Gastrocnemius medialis (tissue), 4 donors: ENCODE measurements at regions of chr18 and their contacts with region 1.

Region 1: DNA sequence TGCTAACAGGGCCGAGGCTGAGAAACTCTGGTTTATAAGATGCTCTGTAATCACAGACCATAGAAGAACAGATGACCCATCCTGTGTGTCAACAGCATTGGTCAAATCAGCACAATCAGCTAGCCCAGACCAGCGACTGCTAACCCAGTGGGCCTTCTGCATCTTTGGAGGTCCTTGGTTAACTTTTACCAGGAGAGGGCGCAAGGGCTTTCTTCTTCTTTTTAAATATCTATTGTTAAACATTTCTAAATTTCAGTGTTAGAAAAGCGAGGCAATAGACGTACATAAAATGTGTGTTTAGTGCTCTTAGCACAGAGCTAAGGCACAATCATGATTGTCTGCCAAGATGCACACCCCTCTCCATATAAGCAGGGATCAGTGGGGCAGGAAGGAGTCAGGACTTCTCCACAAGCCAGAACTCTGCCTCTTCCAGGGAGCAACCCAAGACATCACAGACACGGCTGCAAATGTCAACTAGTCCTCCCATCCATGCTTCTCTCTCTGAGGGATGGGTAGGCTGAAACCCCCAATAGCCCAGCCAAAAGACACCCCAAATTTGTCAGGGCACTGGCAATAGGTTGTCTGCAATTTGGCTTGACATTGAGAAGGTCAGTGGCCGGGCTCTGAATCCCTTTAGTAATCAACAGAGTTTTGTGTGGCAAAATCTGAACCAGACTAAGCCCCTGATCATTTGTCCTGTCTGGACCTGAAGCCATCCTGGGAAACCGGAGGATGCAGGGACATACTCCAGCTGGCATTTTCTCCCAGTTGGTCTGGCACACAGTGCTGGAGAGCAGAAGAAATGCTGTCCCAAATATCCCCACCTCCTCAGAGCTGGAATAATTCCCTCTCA is 188.2 kb downstream of the BCL2 start:
- DNase-seq: peak; percentile 27 to 33
- ATAC-seq: peak; percentile 50 to 59
- H3K4me3 ChIP-seq: no peak overlapping the region
- H3K27ac ChIP-seq: peak overlapping the region; percentile 24 to 55 (median 48)
- H3K4me1 ChIP-seq: peaks cover 18 to 23% of the 10 kb centered on the region in 2 donors
- H3K27me3 ChIP-seq: no peaks in the 10 kb centered on the region
- CTCF ChIP-seq: peak; percentile 48 to 69 (median 63)
- POLR2A ChIP-seq: no peak

Region 2: GRCh38 chr18:63155169-63155852 is 24.0 kb after region 1 on chr18:
- in situ Hi-C with region 1: no loop called
- intact Hi-C with region 1: loop called (anchors 2 kb)
- DNase-seq: peak; percentile 58 to 77
- ATAC-seq: peak; percentile 71 to 92
- H3K4me3 ChIP-seq: peak overlapping the region; percentile 15 to 42 (median 31)
- H3K27ac ChIP-seq: peak overlapping the region in 3 of 4 donors; percentile 60 to 82 (median 63)
- H3K4me1 ChIP-seq: peaks cover 27 to 34% of the 10 kb centered on the region in 2 donors
- H3K27me3 ChIP-seq: no peaks in the 10 kb centered on the region
- CTCF ChIP-seq: peak; percentile 76 to 85 (median 80)
- POLR2A ChIP-seq: no peak

Region 3: GRCh38 chr18:63262369-63263335 is 131.3 kb after region 1 on chr18:
- in situ Hi-C with region 1: no loop called
- intact Hi-C with region 1: loop called (anchors 2 kb)
- DNase-seq: peak; percentile 56 to 72
- ATAC-seq: peak; percentile 67 to 80
- H3K4me3 ChIP-seq: peak overlapping the region in 3 of 4 donors; percentile 10 to 31 (median 16)
- H3K27ac ChIP-seq: peak overlapping the region; percentile 69 to 84 (median 82)
- H3K4me1 ChIP-seq: peaks cover 54 to 61% of the 10 kb centered on the region in 2 donors
- H3K27me3 ChIP-seq: no peaks in the 10 kb centered on the region
- CTCF ChIP-seq: peak in 3 of 5 experiments; percentile 7 to 26 (median 14)
- POLR2A ChIP-seq: peak in 1 of 2 donors; percentile 24

Region 4: DNA sequence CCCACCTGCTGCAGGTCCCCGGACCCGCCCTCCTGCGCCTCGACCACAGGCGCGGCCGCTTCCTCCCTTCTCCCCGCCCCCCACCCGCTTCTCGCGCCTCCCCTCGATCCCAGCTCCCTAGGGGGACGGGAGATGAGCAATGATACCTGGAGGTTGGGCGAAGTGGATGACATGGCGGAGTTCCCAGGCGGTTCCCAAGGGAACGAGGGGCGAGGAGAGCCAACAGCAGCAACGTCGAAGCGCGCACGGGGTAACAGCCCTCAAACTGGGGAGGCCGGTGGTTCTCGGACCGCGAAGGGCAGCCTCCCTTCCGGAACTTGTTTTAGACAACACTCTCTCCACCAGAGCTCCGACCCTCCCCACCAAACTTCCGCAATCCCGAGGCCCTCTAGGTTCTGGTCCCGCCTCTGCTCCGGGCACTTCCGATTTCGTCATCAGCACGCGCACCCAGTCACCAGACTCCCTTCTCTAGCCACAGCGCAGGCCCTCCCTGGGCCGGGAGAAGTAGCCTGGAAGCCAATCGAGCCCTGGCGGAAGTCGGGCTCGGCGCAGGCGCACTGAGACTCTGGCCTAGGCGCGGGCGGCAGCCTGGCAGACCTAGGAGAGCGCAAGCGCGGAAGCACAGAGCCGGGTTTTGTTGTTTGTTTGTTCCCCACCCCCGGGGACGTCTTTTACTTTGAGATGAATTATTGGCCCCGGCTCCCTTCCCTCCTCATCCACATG is 290.9 kb after region 1 on chr18 and contains the start of gene VPS4B:
- in situ Hi-C with region 1: loop called in 3 of 4 experiments (anchors 25 kb)
- intact Hi-C with region 1: loop called (anchors 10 kb)
- DNase-seq: peak; percentile 98 to 99
- ATAC-seq: peak; percentile 99
- H3K4me3 ChIP-seq: peak within 1 kb of the TSS; percentile 93 to 96 (median 94)
- H3K27ac ChIP-seq: peak within 1 kb of the TSS; percentile 88 to 97 (median 93)
- H3K4me1 ChIP-seq: peaks cover 14 to 16% of the 10 kb centered on the region in 2 donors
- H3K27me3 ChIP-seq: no peaks in the 10 kb centered on the region
- CTCF ChIP-seq: peak in 1 of 5 experiments; percentile 20
- POLR2A ChIP-seq: peak; percentile 81 to 84
- total RNA-seq, gene VPS4B: 13.4 to 18.2 (median 16.0) TPM

Region 5: GRCh38 chr18:63439334-63439733 is 308.0 kb after region 1 on chr18:
- in situ Hi-C with region 1: loop called (anchors 10 to 25 kb)
- intact Hi-C with region 1: no loop called
- DNase-seq: peak; percentile 10 to 33
- ATAC-seq: peak; percentile 68 to 80
- H3K4me3 ChIP-seq: no peak overlapping the region
- H3K27ac ChIP-seq: no peak overlapping the region
- H3K4me1 ChIP-seq: peaks cover 3 to 5% of the 10 kb centered on the region in 2 donors
- H3K27me3 ChIP-seq: no peaks in the 10 kb centered on the region
- CTCF ChIP-seq: peak; percentile 64 to 77 (median 67)
- POLR2A ChIP-seq: no peak